ENCODE measurements at regions of chr4 and their contacts with region 1.

Region 1: DNA sequence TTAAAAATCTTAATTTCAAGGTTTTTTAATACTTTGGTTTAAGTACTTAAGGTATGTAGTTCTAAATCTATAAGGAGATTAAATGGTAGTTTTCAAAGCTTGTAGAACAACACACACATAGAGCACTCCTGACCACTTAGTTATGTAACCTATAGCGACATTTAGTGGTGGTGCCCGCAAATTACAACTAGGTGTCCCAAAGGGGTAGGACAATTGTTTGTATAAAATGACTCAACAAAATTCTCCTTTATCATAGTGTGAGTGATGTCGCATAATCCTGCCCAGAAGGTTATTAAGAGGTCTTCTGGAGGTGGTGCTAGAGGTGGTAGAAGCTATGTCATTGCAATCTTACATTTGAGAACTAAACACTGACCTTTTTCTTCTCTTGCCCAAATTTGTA is 373.0 kb upstream of the RASGEF1B start:
- DNase-seq: peak; percentile 56 to 82 (median 68)
- ATAC-seq: peak; percentile 99
- H3K4me3 ChIP-seq: no peak overlapping the region
- H3K27ac ChIP-seq: no peak overlapping the region
- H3K4me1 ChIP-seq: peaks cover 0 to 11% of the 10 kb centered on the region in 2 experiments; a peak in 2 of 5 replicates
- H3K27me3 ChIP-seq: peaks cover 0 to 8% of the 10 kb centered on the region in 2 experiments; a peak in 2 of 5 replicates
- CTCF ChIP-seq: peak; percentile 63 to 90 (median 84)
- EP300 ChIP-seq: no peak
- POLR2A ChIP-seq: no peak
- RAD21 ChIP-seq: peak; percentile 91 to 92

Region 2: DNA sequence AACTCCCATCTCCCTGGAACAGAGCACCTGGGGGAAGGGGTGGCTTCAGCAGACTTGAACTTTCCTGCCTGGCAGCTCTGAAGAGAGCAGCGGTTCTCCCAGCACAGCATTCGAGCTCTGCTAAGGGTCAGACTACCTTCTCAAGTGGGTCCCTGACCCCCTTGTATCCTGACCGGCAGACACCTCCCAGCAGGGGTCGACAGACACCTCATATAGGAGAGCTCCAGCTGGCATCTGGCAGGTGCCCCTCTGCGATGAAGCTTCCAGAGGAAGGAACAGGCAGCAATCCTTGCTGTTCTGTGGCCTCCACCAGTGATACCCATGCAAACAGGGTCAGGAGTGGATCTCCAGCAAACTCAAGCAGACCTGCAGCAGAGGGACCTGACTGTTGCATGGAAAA is 129.0 kb before region 1 on chr4:
- CTCF ChIA-PET with region 1: interaction called, 4 read pairs
- POLR2A ChIA-PET with region 1: no interaction called
- in situ Hi-C with region 1: no loop called
- intact Hi-C with region 1: loop called (anchors 1 kb)
- DNase-seq: no peak
- ATAC-seq: no peak
- H3K4me3 ChIP-seq: no peak overlapping the region
- H3K27ac ChIP-seq: no peak overlapping the region
- H3K4me1 ChIP-seq: no peaks in the 10 kb centered on the region; a peak in 1 of 5 replicates
- H3K27me3 ChIP-seq: peaks cover 3 to 41% of the 10 kb centered on the region in 2 experiments; a peak in 3 of 5 replicates
- CTCF ChIP-seq: peak; percentile 14 to 36 (median 17); a peak in 2 of 6 replicates
- EP300 ChIP-seq: no peak
- POLR2A ChIP-seq: no peak
- RAD21 ChIP-seq: peak in 1 of 2 experiments; percentile 52; a peak in 2 of 4 replicates

Region 3: GRCh38 chr4:81756973-81757372 is 87.7 kb before region 1 on chr4:
- CTCF ChIA-PET with region 1: no interaction called
- POLR2A ChIA-PET with region 1: no interaction called
- in situ Hi-C with region 1: no loop called
- intact Hi-C with region 1: no loop called
- DNase-seq: peak in 1 of 4 experiments; percentile 23
- ATAC-seq: no peak; the same call in 2 of the 3 replicates
- H3K4me3 ChIP-seq: no peak overlapping the region
- H3K27ac ChIP-seq: no peak overlapping the region
- H3K4me1 ChIP-seq: peaks cover 0 to 20% of the 10 kb centered on the region in 2 experiments; a peak in 4 of 5 replicates
- H3K27me3 ChIP-seq: no peaks in the 10 kb centered on the region
- CTCF ChIP-seq: no peak
- EP300 ChIP-seq: no peak
- POLR2A ChIP-seq: no peak
- RAD21 ChIP-seq: no peak

Region 4: DNA sequence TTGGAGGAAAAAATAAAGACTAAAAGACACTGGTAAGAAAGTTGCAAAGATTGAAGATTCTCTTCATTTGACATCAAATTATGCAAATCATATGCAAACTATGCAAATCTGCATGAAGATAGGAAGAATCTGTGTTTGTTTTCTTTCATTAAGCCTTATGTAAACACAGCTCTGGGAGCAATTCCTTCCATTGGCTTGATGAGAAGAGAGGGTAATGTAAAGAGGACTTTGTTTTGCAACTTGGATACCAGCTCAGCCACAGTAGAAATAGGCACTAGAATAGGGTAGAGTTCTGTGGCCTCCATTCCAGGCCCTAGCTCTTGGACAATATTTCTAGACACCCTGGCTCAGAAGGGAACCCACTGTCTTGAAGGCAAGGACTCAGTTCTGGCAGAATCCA is 15.4 kb after region 1 on chr4:
- CTCF ChIA-PET with region 1: no interaction called
- POLR2A ChIA-PET with region 1: no interaction called
- in situ Hi-C with region 1: no loop called
- intact Hi-C with region 1: no loop called
- DNase-seq: no peak
- ATAC-seq: no peak
- H3K4me3 ChIP-seq: no peak overlapping the region
- H3K27ac ChIP-seq: no peak overlapping the region
- H3K4me1 ChIP-seq: no peaks in the 10 kb centered on the region
- H3K27me3 ChIP-seq: no peaks in the 10 kb centered on the region
- CTCF ChIP-seq: no peak
- EP300 ChIP-seq: no peak
- POLR2A ChIP-seq: no peak
- RAD21 ChIP-seq: no peak

Region 5: DNA sequence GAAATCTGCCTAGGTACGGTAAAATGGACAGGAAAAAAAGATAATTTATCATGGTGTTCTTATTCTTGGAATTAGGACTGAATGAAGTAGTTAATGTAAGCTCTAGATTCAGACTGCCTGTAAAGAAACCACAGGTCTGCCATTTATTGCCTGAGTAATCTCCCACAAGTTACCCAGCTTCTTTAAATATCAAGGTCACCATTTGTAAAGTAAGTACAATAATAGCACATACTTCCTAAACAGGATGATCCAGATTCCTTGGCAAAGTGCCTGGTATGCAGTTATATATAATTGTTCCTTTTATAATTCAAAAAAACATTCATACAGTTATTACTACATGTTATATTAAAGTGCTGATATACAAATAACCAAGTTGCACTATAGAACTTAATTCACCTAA is 160.4 kb after region 1 on chr4:
- CTCF ChIA-PET with region 1: no interaction called
- POLR2A ChIA-PET with region 1: no interaction called
- in situ Hi-C with region 1: no loop called
- intact Hi-C with region 1: no loop called
- DNase-seq: no peak
- ATAC-seq: no peak
- H3K4me3 ChIP-seq: no peak overlapping the region
- H3K27ac ChIP-seq: no peak overlapping the region
- H3K4me1 ChIP-seq: no peaks in the 10 kb centered on the region
- H3K27me3 ChIP-seq: no peaks in the 10 kb centered on the region
- CTCF ChIP-seq: no peak
- EP300 ChIP-seq: no peak
- POLR2A ChIP-seq: no peak
- RAD21 ChIP-seq: no peak

Measured in K562 (cell line).